Vagina (tissue), 2 donors: ENCODE measurements at regions of chr3 and their contacts with region 1.

Region 1: DNA sequence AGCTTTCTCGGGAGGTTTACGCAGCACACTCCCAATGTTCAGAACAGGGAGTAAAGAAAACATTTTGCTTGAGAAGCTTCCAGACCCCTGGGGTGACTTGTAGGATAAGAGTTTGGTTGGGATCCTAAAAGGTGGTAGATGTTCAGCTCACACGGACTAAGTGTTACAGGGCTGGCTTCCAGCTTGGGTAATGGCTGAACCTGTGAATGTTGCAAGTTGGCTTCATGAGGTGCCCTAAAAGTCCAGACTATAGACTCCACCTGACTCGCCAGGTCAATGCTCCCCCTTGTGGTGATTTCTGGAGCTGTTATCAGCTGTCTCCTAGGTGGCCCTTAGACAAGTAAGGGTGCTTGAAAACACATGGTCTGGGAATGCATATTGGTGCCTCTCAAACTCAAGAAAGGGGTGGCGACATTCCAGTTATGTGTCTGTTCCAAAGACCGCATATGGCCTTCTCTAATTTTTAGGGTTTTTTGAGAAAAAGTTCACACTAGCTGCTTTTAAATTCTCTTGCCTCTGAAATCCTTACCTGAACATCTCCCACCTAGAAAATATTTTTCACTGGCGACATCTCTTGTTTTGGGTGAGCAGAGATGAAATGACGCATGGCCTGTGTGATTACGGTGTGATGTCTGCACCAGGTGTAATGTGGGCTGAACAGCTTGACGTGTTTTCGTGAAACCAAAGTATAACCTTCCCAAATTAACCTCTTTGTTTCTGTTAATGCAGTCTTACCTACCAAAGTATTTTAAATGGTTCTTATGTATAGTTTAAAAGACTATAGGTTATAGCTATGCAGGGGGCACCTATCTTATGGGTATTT is 175.7 kb upstream of the KBTBD8 start:
- DNase-seq: no peak
- H3K4me3 ChIP-seq: no peak overlapping the region
- H3K27ac ChIP-seq: no peak overlapping the region
- H3K4me1 ChIP-seq: no peaks in the 10 kb centered on the region
- H3K27me3 ChIP-seq: no peaks in the 10 kb centered on the region
- CTCF ChIP-seq: peak; percentile 41 to 60 (median 51)
- POLR2A ChIP-seq: no peak

Region 2: DNA sequence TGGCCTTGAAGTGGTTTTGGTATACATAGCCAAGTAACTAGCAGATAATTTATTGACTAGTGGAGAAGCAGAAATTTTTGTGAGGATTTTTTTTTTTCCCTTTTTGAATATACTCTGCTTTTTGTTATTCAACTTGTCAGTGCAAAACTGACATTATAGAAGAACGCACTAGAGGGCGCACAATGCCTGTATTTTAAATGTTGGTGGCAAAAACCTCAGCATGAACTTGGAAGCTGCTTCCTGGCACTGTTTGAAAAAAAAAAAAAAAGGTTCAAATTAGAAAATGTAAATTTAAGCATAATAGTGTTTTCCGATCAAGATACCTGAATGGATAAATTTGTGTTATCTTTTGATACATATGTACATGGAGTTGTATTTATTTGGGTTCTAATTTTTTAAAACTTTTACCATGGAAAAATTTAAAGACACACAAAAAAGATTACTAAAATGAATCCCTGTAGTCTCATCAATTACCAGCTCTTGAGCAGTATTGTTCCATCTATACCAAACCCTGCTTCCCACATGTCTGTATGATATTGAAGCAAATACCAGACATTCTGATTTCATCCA is 545.6 kb before region 1 on chr3:
- intact Hi-C with region 1: loop called (anchors 1 kb)
- DNase-seq: no peak
- H3K4me3 ChIP-seq: no peak overlapping the region
- H3K27ac ChIP-seq: no peak overlapping the region
- H3K4me1 ChIP-seq: no peaks in the 10 kb centered on the region
- H3K27me3 ChIP-seq: no peaks in the 10 kb centered on the region
- CTCF ChIP-seq: peak; percentile 30 to 56 (median 54)
- POLR2A ChIP-seq: no peak

Region 3: GRCh38 chr3:66500576-66501482 is 321.6 kb before region 1 on chr3 and contains the start of gene LRIG1:
- intact Hi-C with region 1: loop called (anchors 10 kb)
- DNase-seq: peak; percentile 99
- H3K4me3 ChIP-seq: peak within 1 kb of the TSS; percentile 72 to 77
- H3K27ac ChIP-seq: peak within 1 kb of the TSS; percentile 91
- H3K4me1 ChIP-seq: peaks cover 37% of the 10 kb centered on the region
- H3K27me3 ChIP-seq: no peaks in the 10 kb centered on the region
- CTCF ChIP-seq: no peak
- POLR2A ChIP-seq: peak in 1 of 2 donors; percentile 81
- total RNA-seq, gene LRIG1: 30.7 TPM

Region 4: GRCh38 chr3:66722675-66723074 is 99.7 kb before region 1 on chr3:
- intact Hi-C with region 1: no loop called
- DNase-seq: no peak
- H3K4me3 ChIP-seq: no peak overlapping the region
- H3K27ac ChIP-seq: no peak overlapping the region
- H3K4me1 ChIP-seq: peaks cover 10% of the 10 kb centered on the region
- H3K27me3 ChIP-seq: no peaks in the 10 kb centered on the region
- CTCF ChIP-seq: no peak
- POLR2A ChIP-seq: no peak